ENCODE measurements at regions of chr3 and their contacts with region 1.

Region 1: DNA sequence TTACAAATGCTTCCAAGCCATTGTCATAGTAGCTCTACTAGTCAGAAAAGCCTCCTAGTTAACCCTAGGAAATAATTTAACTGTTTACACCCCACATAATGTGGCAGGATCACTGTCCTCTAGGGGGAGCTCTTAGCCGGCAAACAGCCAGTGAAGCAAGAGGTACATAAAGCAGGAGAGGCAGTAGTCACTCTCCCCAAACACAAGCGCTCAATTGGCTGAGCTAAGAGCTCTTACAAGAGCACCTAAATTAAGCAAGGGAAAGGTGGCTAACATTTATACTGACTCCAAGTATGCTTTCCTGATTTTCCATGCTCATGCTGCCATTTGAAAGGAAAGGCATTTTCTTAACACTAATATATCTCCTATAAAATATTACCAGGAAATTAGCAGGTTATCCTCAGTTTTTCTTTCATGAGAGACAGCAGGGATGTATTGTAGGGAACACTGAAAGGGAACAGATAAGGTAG is 37.6 kb downstream of the NCEH1 start:
- DNase-seq: peak; percentile 32
- H3K4me3 ChIP-seq: no peak overlapping the region; a peak in 1 of 4 replicates
- H3K27ac ChIP-seq: no peak overlapping the region; a peak in 1 of 4 replicates
- H3K4me1 ChIP-seq: peaks cover 2 to 8% of the 10 kb centered on the region in 2 experiments; a peak in 3 of 4 replicates
- H3K27me3 ChIP-seq: no peaks in the 10 kb centered on the region
- CTCF ChIP-seq: peak; percentile 85
- EP300 ChIP-seq: no peak
- RAD21 ChIP-seq: peak; percentile 63

Region 2: GRCh38 chr3:172270557-172271166 is 402.6 kb before region 1 on chr3:
- CTCF ChIA-PET with region 1: no interaction called
- POLR2A ChIA-PET with region 1: no interaction called
- DNase-seq: no peak
- H3K4me3 ChIP-seq: no peak overlapping the region
- H3K27ac ChIP-seq: no peak overlapping the region
- H3K4me1 ChIP-seq: no peaks in the 10 kb centered on the region; a peak in 2 of 4 replicates
- H3K27me3 ChIP-seq: no peaks in the 10 kb centered on the region
- CTCF ChIP-seq: no peak
- EP300 ChIP-seq: no peak
- RAD21 ChIP-seq: no peak

Region 3: DNA sequence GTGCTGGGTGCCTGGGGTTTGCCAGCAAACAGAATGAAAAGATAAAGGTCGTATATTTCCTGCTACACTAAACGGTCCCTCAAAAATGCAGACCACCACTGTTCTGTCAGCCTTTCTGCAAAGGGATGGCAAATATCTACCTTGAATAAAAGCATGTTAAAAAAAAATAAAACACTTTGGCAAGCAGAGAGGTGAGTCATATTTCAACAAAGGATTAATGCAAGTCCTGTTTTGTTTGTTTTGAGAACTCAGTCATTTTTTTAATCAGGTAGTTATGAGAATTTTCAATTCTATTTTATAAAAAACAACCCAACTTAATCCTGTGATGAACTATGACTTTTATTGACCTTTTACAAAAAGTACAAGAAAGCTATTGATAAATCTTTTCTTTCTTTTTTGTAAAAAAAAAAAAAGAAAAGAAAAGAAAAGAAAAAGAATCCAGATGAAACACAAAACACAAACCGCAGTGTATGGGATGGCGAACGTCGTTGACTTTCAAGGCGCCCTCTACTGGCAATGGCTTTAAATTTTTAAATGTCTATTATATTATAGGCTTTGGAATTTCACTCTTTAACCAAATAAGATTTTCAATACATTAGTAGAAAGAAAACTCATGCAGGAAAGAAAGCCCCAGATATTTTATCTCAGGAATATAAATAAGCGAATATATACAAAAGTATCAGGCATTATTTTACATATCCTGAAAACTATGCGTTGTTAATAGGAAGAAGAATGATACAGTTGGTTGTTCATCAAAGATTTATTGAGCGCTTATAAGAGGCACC is 50.1 kb before region 1 on chr3:
- CTCF ChIA-PET with region 1: no interaction called
- POLR2A ChIA-PET with region 1: no interaction called
- DNase-seq: peak; percentile 41
- H3K4me3 ChIP-seq: no peak overlapping the region; a peak in 1 of 4 replicates
- H3K27ac ChIP-seq: peak overlapping the region; percentile 34 to 51; a peak in 3 of 4 replicates
- H3K4me1 ChIP-seq: peaks cover 0 to 11% of the 10 kb centered on the region in 2 experiments; a peak in 1 of 4 replicates
- H3K27me3 ChIP-seq: no peaks in the 10 kb centered on the region
- CTCF ChIP-seq: peak; percentile 86
- EP300 ChIP-seq: no peak
- RAD21 ChIP-seq: peak; percentile 50

Region 4: GRCh38 chr3:172687501-172687900 is 14.3 kb after region 1 on chr3:
- CTCF ChIA-PET with region 1: interaction called, 12 read pairs
- POLR2A ChIA-PET with region 1: no interaction called
- DNase-seq: no peak
- H3K4me3 ChIP-seq: no peak overlapping the region
- H3K27ac ChIP-seq: no peak overlapping the region
- H3K4me1 ChIP-seq: no peaks in the 10 kb centered on the region
- H3K27me3 ChIP-seq: no peaks in the 10 kb centered on the region
- CTCF ChIP-seq: no peak
- EP300 ChIP-seq: no peak
- RAD21 ChIP-seq: no peak

Region 5: GRCh38 chr3:172692751-172693338 is 19.6 kb after region 1 on chr3:
- CTCF ChIA-PET with region 1: interaction called, 11 read pairs
- POLR2A ChIA-PET with region 1: no interaction called
- DNase-seq: no peak
- H3K4me3 ChIP-seq: no peak overlapping the region
- H3K27ac ChIP-seq: no peak overlapping the region
- H3K4me1 ChIP-seq: no peaks in the 10 kb centered on the region
- H3K27me3 ChIP-seq: no peaks in the 10 kb centered on the region
- CTCF ChIP-seq: no peak
- EP300 ChIP-seq: no peak
- RAD21 ChIP-seq: no peak

Region 6: DNA sequence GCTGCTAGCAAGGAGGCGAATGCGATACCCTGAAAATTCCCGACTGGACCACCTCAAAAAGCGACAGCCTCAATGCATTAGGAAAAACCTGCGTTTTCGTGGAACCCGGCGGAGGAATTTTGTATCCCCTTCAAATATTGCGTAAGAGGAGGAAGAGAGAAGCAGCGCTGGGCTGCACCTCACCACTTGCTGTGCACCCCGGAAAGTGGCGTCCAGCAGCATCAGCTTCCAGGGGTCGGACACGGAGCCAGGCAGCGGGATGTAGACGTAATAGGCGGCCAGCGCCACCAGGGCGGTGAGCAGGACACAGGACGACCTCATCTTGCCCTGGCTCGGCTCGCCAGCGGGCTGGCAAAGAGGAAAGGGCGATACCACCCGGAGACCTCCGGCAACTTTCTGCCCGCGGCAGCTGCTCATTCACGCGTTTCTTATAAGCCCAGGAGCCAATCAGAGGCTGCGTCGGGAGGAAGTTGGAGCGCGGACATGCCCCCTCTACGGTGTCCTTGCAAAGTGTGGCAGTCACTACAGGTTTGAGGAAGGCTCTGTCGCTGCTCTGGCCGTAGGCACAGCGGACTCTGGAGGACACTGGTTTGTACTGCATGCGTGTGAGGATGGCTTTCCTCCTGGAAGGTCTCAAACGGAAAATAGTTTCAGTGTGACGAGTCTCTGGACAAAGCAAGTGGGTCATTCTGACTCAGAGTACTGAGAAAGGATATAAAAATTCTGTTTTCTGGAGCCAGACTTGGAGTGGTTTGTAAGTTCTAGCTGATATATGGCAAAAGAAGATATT is 37.6 kb after region 1 on chr3 and contains the start of gene NCEH1:
- CTCF ChIA-PET with region 1: interaction called, 14 read pairs
- POLR2A ChIA-PET with region 1: no interaction called
- DNase-seq: peak; percentile 85
- H3K4me3 ChIP-seq: peak within 1 kb of the TSS; percentile 91 to 93
- H3K27ac ChIP-seq: peak within 1 kb of the TSS; percentile 85 to 96
- H3K4me1 ChIP-seq: peaks cover 0 to 7% of the 10 kb centered on the region in 2 experiments; a peak in 2 of 4 replicates
- H3K27me3 ChIP-seq: no peaks in the 10 kb centered on the region
- CTCF ChIP-seq: peak; percentile 79
- EP300 ChIP-seq: peak in 1 of 2 experiments; percentile 50; a peak in 1 of 4 replicates
- RAD21 ChIP-seq: peak; percentile 75
- polyA plus RNA-seq, gene NCEH1: 7.5 and 12.2 TPM in 2 replicates